ENCODE measurements at regions of chr17 and their contacts with region 1.

Region 1: DNA sequence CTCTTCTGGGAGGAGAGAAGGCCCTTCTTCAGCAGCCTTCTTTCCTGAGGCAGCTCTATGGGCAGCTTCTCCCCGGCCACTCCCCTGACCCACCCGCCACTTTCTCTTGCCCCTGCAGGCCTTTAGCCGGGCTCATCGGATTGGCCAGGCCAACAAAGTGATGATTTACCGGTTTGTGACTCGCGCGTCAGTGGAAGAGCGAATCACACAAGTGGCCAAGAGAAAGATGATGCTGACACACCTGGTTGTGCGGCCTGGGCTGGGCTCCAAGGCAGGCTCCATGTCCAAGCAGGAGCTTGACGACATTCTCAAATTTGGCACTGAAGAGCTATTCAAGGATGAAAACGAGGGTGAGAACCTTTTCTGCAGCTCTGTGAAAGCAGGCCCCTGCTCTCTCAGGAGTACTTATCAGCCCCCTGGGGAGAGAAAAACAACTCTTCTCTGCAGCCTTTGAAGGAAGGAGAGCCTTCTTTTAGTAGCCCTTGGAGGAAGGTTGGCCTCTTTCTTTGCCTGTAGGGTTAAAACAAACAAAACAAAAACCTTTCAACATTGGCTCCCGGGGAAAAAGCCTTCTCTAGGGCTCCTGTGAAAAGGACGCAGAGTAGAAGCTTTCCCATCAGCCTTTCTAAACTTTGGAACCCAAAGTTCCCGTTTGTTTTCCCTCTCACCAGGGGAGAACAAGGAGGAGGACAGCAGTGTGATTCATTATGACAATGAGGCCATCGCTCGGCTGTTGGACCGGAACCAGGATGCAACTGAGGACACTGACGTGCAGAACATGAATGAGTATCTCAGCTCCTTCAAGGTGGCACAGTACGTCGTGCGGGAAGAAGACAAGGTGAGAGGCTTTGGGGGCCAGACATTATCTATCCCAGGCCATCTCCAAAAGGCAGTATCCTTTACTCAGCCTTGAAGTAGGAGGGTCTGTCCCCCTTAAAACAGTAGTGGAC is 12.7 kb downstream of the RNF227 start:
- DNase-seq: no peak
- H3K4me3 ChIP-seq: no peak overlapping the region
- H3K4me1 ChIP-seq: no peaks in the 10 kb centered on the region
- H3K27me3 ChIP-seq: no peaks in the 10 kb centered on the region

Region 2: DNA sequence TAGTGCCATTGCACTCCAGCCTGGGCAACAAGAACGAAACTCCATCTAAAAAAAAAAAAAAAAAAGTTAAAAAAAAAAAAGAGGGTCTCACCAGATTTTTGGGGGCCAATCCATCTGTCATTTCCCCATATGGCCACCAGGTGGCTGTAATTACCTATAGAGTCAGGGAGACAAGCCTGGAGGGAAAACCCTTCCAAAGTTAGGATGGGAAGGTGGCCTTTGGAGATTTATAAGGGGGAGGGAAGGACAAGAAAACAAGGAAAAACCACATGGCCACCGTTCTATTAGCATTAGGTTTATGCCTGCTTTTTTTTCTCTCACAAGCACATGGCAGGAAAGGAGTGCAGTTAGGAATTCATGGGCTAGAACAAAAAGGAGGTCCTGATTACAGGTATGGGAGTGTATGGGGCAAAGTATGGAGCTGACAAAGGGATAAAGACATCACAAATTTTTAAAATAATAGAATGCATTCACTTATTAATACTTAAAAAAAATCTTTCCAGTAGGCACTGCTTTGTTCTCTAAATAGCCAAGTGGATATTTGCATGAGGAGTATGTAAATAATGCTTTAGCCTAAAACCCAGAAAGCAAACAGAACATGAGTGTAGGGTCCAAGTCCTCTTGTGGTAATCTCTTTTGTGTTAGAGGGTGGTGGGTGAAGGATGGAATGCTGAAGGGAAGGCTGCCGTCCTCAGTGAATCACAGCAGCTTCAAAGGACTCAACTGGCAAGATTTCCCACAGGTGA is 40.6 kb before region 1 on chr17:
- in situ Hi-C with region 1: loop called (anchors 5 kb)
- DNase-seq: peak; percentile 64 to 74
- H3K4me3 ChIP-seq: no peak overlapping the region
- H3K4me1 ChIP-seq: peaks cover 16% of the 10 kb centered on the region
- H3K27me3 ChIP-seq: no peaks in the 10 kb centered on the region

Measured in HAP-1 (cell line).